PC-9 (cell line): ENCODE measurements at regions of chr3 and their contacts with region 1.

Region 1: GRCh38 chr3:103459815-103460214 is 1025.0 kb downstream of the ZPLD1 start:
- DNase-seq: no peak
- H3K4me3 ChIP-seq: no peak overlapping the region
- H3K27ac ChIP-seq: no peak overlapping the region
- H3K4me1 ChIP-seq: no peaks in the 10 kb centered on the region
- H3K27me3 ChIP-seq: no peaks in the 10 kb centered on the region
- CTCF ChIP-seq: no peak

Region 2: GRCh38 chr3:102745882-102746281 is 713.9 kb before region 1 on chr3:
- CTCF ChIA-PET with region 1: interaction called, 11 read pairs
- POLR2A ChIA-PET with region 1: no interaction called
- intact Hi-C with region 1: no loop called
- DNase-seq: no peak
- H3K4me3 ChIP-seq: no peak overlapping the region
- H3K27ac ChIP-seq: no peak overlapping the region
- H3K4me1 ChIP-seq: no peaks in the 10 kb centered on the region
- H3K27me3 ChIP-seq: no peaks in the 10 kb centered on the region
- CTCF ChIP-seq: peak; percentile 48; the same call in 1 of the 2 replicates